Activated CD4-positive, alpha-beta T cell treated with anti-CD3 and anti-CD28 coated beads, Interleukin-2, amount 10 ng/mL, durations not matched to agents 24 days and 14 days (primary cell): ENCODE measurements at regions of chr15 and their contacts with region 1.

Region 1: DNA sequence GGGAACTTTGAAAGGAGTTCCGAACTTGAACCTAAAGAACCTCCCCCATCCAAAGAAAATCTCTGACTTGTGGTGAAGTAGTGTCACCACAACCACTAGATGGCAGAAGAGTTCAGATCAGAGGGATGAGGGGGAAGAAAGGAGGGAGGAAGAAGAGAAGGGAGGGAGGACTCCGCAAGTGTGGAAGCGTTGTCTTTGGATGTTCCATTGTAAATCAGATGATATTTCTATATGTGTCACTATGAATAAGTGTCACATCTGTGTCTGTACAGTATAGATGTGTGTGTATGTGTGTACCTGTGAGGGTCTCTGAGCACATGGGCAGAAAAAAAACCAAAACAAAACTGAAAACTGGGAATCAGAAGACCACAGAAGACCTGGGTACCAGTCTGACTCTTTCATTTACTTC is 16.9 kb downstream of the SLC24A1 start:
- DNase-seq: peak; percentile 87
- H3K4me3 Mint-ChIP-seq: peak overlapping the region; percentile 47
- H3K27ac Mint-ChIP-seq: peak overlapping the region; percentile 8
- H3K4me1 Mint-ChIP-seq: peaks cover 10% of the 10 kb centered on the region
- H3K27me3 Mint-ChIP-seq: no peaks in the 10 kb centered on the region

Region 2: DNA sequence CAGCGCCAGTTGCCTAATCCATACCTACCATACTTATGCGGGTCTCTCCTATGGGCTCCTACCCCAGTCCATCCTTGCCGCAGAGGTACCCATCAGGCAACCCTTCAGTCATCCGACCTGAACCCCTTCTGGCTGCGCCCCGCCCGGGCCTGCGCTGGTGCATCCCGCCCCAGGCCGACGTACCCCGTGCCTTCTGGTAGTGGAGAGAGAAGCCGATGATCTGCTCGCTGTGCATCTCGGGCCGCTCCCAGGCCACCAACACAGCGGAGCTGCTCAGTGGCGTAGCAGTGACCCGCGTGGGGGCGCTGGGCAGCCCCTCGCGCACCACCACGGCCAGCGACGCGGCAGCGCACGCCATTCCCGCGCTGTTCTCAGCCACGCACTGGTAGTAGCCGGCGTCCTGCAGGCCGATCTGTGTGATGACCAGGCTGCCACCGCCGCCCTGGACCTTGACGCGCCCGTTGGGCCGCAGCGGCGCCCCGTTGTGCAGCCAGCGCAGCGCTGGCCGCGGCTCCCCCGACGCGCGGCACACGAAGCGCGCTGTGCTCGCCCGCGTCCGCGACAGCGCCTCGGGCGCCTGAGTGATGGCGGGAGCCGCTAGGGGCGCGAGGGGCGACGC is 243.0 kb before region 1 on chr15:
- intact Hi-C with region 1: no loop called
- DNase-seq: no peak
- H3K4me3 Mint-ChIP-seq: no peak overlapping the region
- H3K27ac Mint-ChIP-seq: no peak overlapping the region
- H3K4me1 Mint-ChIP-seq: peaks cover 6% of the 10 kb centered on the region
- H3K27me3 Mint-ChIP-seq: peaks cover 65% of the 10 kb centered on the region

Region 3: DNA sequence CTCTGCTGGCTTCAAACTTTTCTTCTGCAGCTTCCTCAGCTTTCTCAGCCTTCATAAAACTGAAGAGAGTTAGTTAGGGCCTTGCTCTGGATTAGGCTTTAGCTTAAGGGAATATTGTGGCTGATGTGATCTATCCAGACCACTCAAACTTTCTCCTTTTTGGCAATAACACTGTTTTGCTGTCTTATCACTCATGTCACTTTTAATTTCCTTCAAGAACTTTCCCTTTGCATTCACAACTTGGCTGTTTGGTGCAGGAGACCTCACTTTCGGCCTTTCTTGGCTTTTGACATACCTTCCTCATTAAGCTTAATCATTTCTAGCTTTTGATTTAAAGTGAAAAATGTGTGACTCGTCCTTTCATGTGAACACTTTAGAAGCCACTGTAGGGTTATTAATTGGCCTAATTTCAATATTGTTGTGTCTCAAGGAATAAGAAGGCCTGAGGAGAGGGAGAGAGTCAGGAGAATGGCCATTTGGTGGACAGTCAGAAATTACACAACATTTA is 43.8 kb after region 1 on chr15:
- intact Hi-C with region 1: no loop called
- DNase-seq: no peak
- H3K4me3 Mint-ChIP-seq: no peak overlapping the region
- H3K27ac Mint-ChIP-seq: no peak overlapping the region
- H3K4me1 Mint-ChIP-seq: peaks cover 11% of the 10 kb centered on the region
- H3K27me3 Mint-ChIP-seq: no peaks in the 10 kb centered on the region

Region 4: GRCh38 chr15:65832549-65833364 is 194.1 kb after region 1 on chr15:
- intact Hi-C with region 1: loop called (anchors 5 kb)
- DNase-seq: peak; percentile 90
- H3K4me3 Mint-ChIP-seq: peak overlapping the region; percentile 84
- H3K27ac Mint-ChIP-seq: peak overlapping the region; percentile 99
- H3K4me1 Mint-ChIP-seq: peaks cover 48% of the 10 kb centered on the region
- H3K27me3 Mint-ChIP-seq: no peaks in the 10 kb centered on the region

Region 5: DNA sequence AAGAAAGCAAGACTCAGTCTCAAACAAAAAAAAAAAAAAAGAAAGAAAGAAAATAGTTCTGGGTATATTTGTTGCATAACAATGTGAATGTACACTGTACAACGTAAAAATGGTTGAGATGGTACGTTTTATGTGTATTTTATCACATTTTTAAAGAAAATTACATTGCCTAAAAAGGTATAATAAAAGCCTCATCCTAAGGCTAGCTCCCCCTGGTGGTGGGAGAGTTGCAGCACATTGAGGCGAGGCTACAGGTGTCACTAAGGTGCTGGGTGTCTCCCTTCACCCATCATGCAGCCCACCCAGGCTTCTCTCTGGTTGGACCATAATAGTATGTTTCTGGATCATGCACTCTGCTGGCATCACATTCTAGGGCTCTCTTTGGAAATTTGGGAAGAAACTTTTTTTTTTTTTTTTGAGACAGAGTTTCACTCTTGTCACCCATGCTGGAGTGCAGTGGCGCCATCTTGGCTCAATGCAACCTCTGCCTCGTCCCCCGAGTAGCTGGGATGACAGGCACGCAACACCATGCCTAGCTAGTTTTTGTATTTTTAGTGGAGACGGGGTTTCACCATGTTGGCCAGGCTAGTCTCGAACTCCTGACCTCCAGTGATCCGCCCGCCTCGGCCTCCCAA is 218.3 kb after region 1 on chr15:
- intact Hi-C with region 1: loop called (anchors 1 kb)
- DNase-seq: peak; percentile 95
- H3K4me3 Mint-ChIP-seq: no peak overlapping the region
- H3K27ac Mint-ChIP-seq: peak overlapping the region; percentile 44
- H3K4me1 Mint-ChIP-seq: peaks cover 6% of the 10 kb centered on the region
- H3K27me3 Mint-ChIP-seq: peaks cover 9% of the 10 kb centered on the region